HepG2 (cell line): ENCODE measurements at regions of chr2 and their contacts with region 1.

Region 1: DNA sequence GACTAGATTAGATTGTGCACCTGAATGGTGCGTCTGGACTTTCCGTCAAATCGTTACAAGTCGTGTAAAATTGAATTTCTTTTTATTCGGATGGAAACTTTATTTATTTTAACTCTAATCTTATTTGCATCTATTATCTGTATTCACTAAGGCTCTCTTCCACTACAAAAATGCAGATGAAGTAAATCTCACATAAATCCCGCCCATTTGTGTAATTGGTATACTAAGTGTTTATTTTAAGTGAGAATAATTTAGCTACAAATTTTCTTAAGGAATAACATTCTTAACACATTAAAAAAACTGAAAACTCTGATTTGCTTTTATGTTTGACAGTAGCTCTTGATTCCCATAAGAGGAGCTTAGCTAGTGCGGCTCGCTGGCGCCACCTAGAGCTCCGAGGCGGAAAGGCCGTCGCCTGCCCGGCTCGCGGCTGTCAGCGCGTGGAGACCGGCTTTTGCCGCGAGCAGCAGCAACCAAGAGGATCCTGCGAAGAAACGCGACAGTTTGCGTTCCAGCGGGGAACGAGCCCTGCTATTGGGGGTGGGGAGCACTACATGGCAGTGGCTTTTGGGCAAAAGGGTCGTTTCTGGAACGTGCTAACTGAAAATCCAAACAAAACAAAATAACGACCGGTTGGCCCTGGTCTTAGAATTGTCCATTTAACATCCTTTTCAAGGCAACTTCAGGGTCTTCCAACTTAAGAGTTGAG is 6.7 kb downstream of the SP9 start:
- DNase-seq: peak; percentile 67
- ATAC-seq: peak; percentile 68
- H3K4me3 ChIP-seq: peak overlapping the region; percentile 48 to 70 (median 59)
- H3K27ac ChIP-seq: no peak overlapping the region
- H3K4me1 ChIP-seq: peaks cover 55% of the 10 kb centered on the region
- H3K27me3 ChIP-seq: peaks cover 21 to 74% of the 10 kb centered on the region in 2 experiments; a peak in 4 of 5 replicates
- CTCF ChIP-seq: peak; percentile 96
- EP300 ChIP-seq: no peak
- POLR2A ChIP-seq: no peak
- RAD21 ChIP-seq: peak; percentile 91

Region 2: DNA sequence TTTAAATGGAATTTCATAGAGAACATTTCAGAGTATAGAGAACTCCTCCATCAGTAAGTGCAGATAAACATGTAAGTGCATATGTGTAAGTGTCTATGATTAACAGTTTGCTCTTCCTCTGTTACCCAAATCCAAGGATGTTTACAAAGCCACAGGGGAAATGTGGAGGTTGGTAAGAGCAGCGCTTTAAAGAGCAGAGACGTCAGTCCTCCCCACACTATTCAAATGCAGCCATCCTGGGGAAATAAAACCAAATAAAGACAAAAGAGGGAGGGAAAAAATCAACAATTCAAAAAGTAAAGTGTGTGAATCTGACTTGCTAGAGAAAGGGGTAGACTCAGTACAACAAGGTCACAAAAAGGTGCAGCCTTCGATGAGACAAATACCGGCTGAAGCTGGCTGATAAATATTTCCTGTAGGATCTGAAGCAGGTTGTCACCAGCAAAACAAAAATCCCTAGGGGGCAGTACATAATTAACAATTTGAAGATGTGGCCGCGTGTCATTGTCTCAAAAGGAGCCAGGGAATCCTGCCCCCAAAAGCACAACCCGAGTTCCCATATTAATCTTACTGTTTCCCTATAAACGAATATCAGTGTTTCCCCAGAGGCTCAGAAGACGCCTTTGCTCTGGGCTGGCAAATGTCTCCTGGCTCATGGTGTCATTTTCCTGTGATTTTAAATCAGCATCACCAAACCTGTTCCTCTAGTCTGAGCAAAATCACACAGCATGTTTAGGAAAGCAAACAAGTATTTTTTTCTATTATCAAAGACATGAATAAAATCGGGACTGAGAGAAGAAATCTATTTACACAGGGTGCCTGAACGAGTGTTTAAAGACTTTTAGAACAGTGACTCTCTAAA is 770.2 kb before region 1 on chr2:
- CTCF ChIA-PET with region 1: no interaction called
- POLR2A ChIA-PET with region 1: no interaction called
- in situ Hi-C with region 1: loop called (anchors 10 kb)
- intact Hi-C with region 1: loop called (anchors 1 kb)
- DNase-seq: peak; percentile 26
- ATAC-seq: peak; percentile 65
- H3K4me3 ChIP-seq: no peak overlapping the region
- H3K27ac ChIP-seq: no peak overlapping the region
- H3K4me1 ChIP-seq: no peaks in the 10 kb centered on the region
- H3K27me3 ChIP-seq: peaks cover 0 to 14% of the 10 kb centered on the region in 2 experiments; a peak in 2 of 5 replicates
- CTCF ChIP-seq: peak; percentile 47
- EP300 ChIP-seq: no peak
- POLR2A ChIP-seq: no peak
- RAD21 ChIP-seq: no peak

Region 3: DNA sequence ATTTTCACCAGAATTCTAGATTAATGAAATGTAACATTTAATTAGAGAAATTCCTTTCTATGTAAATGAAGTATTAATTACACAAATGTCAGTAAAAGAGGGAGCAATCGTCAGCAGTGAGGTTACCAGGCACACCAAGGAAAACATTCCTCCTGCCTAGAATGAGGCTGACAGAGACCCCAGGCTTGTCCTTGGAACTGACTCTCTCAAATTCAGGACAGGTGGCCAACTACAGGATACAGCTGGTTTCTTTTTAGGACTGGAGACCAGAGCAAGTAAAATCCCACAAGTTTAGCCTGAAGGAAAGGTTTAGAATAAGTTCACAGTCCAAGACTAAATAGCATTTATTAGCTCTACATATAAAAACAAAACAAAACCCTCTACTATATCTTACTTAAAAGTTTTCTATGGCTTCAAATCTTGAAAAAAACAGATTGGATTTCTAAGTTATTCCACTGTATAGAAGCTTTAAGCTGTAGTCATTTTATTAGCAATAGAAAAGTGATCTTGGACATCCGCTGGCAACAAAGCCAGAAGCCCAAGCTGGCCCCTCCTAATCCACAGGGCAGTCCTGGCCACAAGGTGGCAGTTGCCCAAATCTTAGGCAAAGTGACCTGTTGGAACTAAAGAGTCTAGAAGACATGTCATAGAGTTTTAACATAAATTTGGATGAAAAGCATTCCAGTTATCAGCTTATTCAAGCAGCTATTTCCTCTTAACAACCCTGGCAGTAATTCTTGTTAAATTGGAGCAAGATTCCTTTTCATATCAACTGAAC is 457.2 kb before region 1 on chr2:
- CTCF ChIA-PET with region 1: interaction called, 13 read pairs
- POLR2A ChIA-PET with region 1: no interaction called
- in situ Hi-C with region 1: loop called (anchors 5 kb)
- intact Hi-C with region 1: loop called (anchors 1 kb)
- DNase-seq: peak; percentile 56
- ATAC-seq: peak; percentile 93
- H3K4me3 ChIP-seq: no peak overlapping the region
- H3K27ac ChIP-seq: no peak overlapping the region
- H3K4me1 ChIP-seq: no peaks in the 10 kb centered on the region
- H3K27me3 ChIP-seq: peaks cover 0 to 25% of the 10 kb centered on the region in 2 experiments; a peak in 2 of 5 replicates
- CTCF ChIP-seq: peak; percentile 77
- EP300 ChIP-seq: no peak
- POLR2A ChIP-seq: no peak
- RAD21 ChIP-seq: peak; percentile 64

Region 4: DNA sequence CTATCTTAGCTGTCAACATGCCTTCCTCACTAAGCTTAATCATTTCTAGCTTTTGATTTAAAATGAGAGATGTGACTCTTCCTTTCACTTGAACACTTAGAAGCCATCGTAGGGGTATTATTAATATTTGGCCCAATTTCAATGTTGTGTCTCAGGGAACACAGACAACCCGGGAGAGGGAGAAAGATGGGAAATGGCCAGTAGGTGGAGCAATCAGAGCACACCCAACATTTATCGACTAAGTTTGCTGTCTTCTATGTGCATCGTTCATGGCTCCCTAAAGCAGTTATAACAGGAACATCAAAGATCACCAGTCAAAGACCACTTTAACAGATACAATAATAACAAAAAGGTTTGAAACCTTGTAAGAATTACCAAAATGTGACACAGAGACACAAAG is 203.3 kb before region 1 on chr2:
- CTCF ChIA-PET with region 1: interaction called, 14 read pairs
- POLR2A ChIA-PET with region 1: no interaction called
- in situ Hi-C with region 1: no loop called
- intact Hi-C with region 1: loop called (anchors 5 kb)
- DNase-seq: peak; percentile 23
- ATAC-seq: peak; percentile 60; the same call in 2 of the 3 replicates
- H3K4me3 ChIP-seq: no peak overlapping the region
- H3K27ac ChIP-seq: no peak overlapping the region
- H3K4me1 ChIP-seq: no peaks in the 10 kb centered on the region
- H3K27me3 ChIP-seq: no peaks in the 10 kb centered on the region
- CTCF ChIP-seq: peak; percentile 51
- EP300 ChIP-seq: no peak
- POLR2A ChIP-seq: no peak
- RAD21 ChIP-seq: no peak

Region 5: DNA sequence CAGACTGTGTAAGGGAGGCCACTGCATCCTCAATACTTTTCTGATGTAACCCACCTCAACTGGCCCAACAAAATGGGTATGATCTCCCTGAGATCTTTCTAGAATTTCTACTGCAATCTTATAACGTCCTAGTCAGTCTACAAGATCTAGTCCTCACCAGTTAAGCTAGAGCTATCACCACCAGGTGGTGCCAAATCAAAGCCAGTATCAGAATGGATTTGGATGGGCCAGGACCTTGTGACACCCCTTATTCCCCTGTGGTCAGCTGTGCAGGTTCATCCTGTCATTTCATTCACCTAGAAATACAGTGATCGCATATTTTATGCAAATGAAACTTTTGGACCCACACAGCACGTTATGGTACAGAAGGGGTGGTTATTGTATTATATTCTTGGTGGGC is 183.4 kb before region 1 on chr2:
- CTCF ChIA-PET with region 1: interaction called, 48 read pairs
- POLR2A ChIA-PET with region 1: interaction called, 4 read pairs
- in situ Hi-C with region 1: loop called (anchors 5 kb)
- intact Hi-C with region 1: loop called (anchors 1 kb)
- DNase-seq: peak; percentile 68
- ATAC-seq: peak; percentile 96
- H3K4me3 ChIP-seq: no peak overlapping the region
- H3K27ac ChIP-seq: no peak overlapping the region
- H3K4me1 ChIP-seq: no peaks in the 10 kb centered on the region
- H3K27me3 ChIP-seq: no peaks in the 10 kb centered on the region
- CTCF ChIP-seq: peak; percentile 68
- EP300 ChIP-seq: no peak
- POLR2A ChIP-seq: no peak
- RAD21 ChIP-seq: peak; percentile 64